Activated CD8-positive, alpha-beta T cell treated with anti-CD3 and anti-CD28 coated beads for 36 hours (primary cell): ENCODE measurements at regions of chr17 and their contacts with region 1.

Region 1: DNA sequence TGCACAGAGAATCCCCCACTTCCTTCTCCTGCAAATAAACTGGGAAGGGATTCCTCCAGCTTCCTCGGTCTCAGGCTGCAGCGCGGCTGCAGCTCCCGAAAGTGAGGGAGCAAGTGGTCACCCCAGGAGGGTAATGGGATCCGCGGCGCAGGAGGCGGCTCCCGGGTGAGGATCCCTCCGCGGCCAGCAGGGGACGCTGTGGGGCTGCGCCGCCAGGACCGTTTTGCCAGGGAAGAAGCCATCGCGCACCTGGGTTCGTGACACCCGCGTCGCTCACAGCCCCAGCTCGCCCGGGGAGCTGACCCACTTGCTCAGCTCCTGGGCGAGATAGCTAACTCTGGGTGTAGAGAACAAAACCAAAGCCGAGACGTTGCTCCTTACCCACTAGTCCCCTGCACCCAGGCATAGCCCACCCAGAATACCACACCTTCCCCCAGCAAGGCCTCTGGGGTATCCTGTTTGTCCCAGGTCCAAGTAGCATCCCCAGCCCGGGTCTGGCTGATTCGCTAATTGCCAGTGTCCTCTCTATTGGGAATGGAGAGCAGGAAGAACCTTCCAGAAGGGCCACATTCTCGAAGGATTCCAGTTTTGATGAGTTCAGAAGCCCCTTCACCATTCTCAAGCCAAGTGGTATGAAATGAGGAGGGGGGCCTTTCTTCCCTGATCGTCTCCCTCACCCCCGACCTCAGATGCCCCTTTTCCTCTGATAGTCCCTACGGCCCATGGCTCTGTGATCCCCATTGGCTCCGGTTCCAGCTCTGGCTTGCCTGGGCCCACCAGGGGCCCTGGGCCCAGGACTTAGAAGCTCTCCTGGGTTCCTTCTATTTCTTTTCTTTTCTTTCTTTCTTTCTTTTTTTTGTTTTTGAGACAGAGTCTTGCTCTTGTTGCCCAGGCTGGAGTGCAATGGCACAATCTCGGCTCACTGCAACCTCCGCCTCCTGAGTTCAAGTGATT is 14.1 kb downstream of the CYGB start:
- DNase-seq: peak; percentile 82
- ATAC-seq: peak; percentile 88
- H3K4me3 Mint-ChIP-seq: no peak overlapping the region
- H3K27ac Mint-ChIP-seq: peak overlapping the region; percentile 46
- H3K4me1 Mint-ChIP-seq: peaks cover 15% of the 10 kb centered on the region
- H3K27me3 Mint-ChIP-seq: no peaks in the 10 kb centered on the region
- CTCF ChIP-seq: peak; percentile 100

Region 2: DNA sequence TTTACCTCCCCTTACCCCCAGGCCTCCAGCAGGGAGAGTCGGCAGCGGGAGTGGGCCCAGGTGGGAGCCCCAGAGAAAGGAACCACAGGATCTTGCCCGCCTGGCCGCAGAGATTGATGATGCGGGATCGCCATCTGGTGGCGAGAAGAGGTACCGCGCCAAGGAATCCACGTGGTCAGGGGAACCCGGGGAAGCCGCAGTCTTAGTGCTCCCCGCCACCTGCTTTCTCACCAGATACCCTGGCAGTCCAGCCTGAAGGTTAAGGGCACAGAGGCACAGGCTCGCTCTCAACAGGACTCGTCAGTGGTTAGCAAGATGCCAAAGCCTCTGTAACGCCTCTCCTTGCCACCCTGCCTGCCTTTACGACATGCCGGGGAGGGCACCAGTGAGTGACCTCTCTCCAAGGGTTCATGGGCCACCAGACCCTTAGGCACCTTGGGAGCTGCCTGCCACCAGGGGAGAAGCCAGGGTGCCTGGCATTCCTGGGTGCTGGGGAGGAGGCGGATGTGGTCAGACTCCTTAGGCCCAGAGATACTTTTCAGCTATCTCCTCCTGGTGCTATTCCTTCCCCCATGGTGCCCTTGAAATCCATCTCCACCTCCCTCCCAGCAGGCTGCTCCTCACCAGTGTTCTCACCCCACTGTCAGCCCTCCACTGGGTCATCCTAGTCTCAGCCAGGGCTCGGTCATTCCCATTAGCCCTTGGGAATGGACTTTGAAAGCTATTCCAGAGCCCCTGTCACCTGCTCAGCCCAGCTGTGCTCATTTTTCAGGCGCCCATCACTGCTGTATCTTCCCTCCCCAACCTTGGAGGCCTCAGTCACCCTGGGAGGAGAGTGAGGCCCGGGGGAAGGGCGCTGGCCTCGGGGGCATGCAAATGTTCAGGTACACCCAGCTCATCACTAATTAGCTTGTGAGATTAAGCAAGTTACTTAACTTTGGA is 16.7 kb before region 1 on chr17:
- CTCF ChIA-PET with region 1: interaction called, 33 read pairs
- POLR2A ChIA-PET with region 1: no interaction called
- intact Hi-C with region 1: no loop called
- DNase-seq: peak; percentile 92
- ATAC-seq: peak; percentile 89
- H3K4me3 Mint-ChIP-seq: no peak overlapping the region
- H3K27ac Mint-ChIP-seq: no peak overlapping the region
- H3K4me1 Mint-ChIP-seq: peaks cover 15% of the 10 kb centered on the region
- H3K27me3 Mint-ChIP-seq: no peaks in the 10 kb centered on the region
- CTCF ChIP-seq: peak; percentile 82

Region 3: GRCh38 chr17:76557368-76558197 is 34.2 kb after region 1 on chr17:
- CTCF ChIA-PET with region 1: interaction called, 36 read pairs
- POLR2A ChIA-PET with region 1: interaction called, 8 read pairs
- intact Hi-C with region 1: loop called (anchors 5 kb)
- DNase-seq: peak; percentile 97
- ATAC-seq: peak; percentile 94
- H3K4me3 Mint-ChIP-seq: peak overlapping the region; percentile 99
- H3K27ac Mint-ChIP-seq: peak overlapping the region; percentile 98
- H3K4me1 Mint-ChIP-seq: peaks cover 46% of the 10 kb centered on the region
- H3K27me3 Mint-ChIP-seq: no peaks in the 10 kb centered on the region
- CTCF ChIP-seq: peak; percentile 60

Region 4: DNA sequence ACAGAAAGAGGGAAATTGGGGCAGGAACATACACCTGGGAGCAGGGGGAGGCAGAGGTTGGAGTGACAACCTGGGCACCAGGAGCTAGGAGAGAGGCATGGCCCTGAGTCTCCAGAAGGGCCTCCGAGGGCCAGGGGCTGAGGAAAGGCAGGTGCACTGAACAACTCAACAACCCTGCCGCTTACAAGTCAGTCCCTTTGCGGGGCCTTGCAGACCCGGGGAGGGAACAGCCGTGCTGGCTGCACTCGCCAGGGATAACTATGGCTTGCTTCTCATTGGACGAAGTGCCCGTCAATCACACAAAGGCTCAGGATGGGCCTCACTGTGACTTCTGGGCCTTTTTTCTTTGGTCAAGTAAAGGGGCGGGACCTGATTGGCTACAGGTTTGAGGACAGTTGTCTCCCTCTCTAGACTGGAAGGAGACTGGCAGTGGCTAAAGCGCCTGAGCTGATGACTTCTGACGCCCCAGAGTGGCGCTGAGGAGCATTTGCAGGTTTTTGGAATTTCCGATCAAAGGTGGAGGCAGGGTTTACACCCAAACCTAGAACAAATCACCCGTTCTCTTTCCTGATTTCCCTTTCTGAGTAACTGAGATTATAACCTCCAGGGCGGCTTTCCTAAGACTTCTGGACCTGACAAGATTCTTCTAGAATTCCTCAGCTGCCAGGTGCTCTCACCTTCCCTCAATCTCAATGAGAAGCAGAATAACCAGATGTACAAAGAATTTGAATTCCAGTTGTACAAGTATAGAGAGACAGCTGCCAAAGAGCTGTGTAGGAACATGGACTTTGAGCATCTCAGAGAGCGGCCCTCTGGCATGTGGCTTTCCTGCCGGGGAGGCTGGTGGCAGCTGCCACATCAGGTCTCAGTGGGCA is 89.9 kb after region 1 on chr17:
- CTCF ChIA-PET with region 1: interaction called, 21 read pairs
- POLR2A ChIA-PET with region 1: no interaction called
- intact Hi-C with region 1: no loop called
- DNase-seq: no peak
- ATAC-seq: no peak
- H3K4me3 Mint-ChIP-seq: no peak overlapping the region
- H3K27ac Mint-ChIP-seq: no peak overlapping the region
- H3K4me1 Mint-ChIP-seq: peaks cover 5% of the 10 kb centered on the region
- H3K27me3 Mint-ChIP-seq: no peaks in the 10 kb centered on the region
- CTCF ChIP-seq: no peak

Region 5: GRCh38 chr17:76671123-76671911 is 148.0 kb after region 1 on chr17:
- CTCF ChIA-PET with region 1: interaction called, 10 read pairs
- POLR2A ChIA-PET with region 1: no interaction called
- intact Hi-C with region 1: no loop called
- DNase-seq: peak; percentile 100
- ATAC-seq: peak; percentile 99
- H3K4me3 Mint-ChIP-seq: peak overlapping the region; percentile 89
- H3K27ac Mint-ChIP-seq: peak overlapping the region; percentile 95
- H3K4me1 Mint-ChIP-seq: peaks cover 32% of the 10 kb centered on the region
- H3K27me3 Mint-ChIP-seq: no peaks in the 10 kb centered on the region
- CTCF ChIP-seq: no peak

Region 6: DNA sequence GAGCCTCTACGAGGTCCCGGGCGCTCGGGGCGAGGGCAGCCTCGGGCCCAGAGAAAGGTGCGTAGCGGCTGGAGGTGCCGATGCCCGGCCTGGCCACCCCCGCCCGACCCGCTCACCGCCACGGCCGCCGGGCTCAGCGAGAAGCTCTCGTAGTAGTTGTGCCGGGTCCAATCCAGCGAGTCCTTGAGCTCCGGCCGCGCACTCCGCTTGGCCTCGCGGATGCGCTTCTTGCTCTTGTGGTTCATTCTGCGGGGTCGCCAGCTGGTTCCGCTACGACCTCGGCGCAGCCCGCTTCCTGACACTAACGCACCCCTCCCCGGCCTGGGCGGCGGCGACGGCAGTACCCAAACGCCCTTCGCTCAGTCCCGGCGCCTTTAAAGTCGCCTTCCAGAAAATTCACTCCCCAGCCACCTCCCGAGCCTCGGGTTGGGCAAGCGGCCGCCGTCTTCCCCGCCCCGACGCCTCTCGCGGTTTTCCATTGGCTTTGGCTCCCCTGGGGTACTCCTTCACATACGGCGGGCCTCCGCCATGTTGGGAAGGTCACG is 202.9 kb after region 1 on chr17 and contains the start of gene JMJD6:
- CTCF ChIA-PET with region 1: no interaction called
- POLR2A ChIA-PET with region 1: no interaction called
- intact Hi-C with region 1: no loop called
- DNase-seq: peak; percentile 96
- ATAC-seq: peak; percentile 87
- H3K4me3 Mint-ChIP-seq: peak within 1 kb of the TSS; percentile 98
- H3K27ac Mint-ChIP-seq: peak within 1 kb of the TSS; percentile 95
- H3K4me1 Mint-ChIP-seq: peaks cover 40% of the 10 kb centered on the region
- H3K27me3 Mint-ChIP-seq: no peaks in the 10 kb centered on the region
- CTCF ChIP-seq: no peak
- total RNA-seq, gene JMJD6: 77.9 to 80.3 TPM